Mammary epithelial cell (primary cell): ENCODE measurements at regions of chr15 and their contacts with region 1.

Region 1: DNA sequence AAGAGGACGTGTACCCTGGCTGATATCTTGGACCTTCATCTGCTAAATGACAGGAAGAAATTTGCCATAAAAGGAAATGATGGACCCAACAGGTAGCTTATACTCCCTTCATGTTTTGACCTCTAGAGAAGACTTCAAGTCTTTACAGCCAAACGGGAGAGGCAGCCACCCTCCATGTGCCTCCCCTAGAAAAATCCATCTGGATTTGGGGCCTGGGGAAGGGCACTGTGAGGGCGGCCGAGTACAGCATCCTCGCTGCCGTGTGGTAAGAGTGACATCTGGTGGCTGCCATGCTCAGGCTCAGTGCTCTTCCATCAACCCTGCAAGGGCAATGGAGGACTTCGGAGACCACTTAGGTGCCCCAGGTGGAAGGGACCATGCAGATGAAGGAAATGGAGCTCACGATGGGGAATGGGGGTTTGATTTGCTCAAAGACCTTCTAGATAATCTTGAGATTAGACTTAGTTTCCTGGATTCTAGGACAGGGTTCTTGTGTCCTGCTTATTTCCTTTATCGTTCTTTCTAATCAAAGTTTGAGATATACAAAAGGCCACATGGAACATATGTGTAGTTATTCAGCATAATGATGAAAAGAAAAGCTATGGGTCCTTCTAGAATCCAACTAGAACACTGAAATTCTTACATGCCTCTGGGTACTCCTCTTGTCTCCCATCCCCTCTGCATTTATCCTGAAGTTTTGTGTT is 44.4 kb downstream of the AQP9 start:
- DNase-seq: peak; percentile 45
- H3K4me3 ChIP-seq: no peak overlapping the region
- H3K27ac ChIP-seq: no peak overlapping the region
- H3K4me1 ChIP-seq: peaks cover 22% of the 10 kb centered on the region
- H3K27me3 ChIP-seq: no peaks in the 10 kb centered on the region
- CTCF ChIP-seq: peak; percentile 97 to 99

Region 2: GRCh38 chr15:57751177-57751800 is 431.3 kb before region 1 on chr15:
- CTCF ChIA-PET with region 1: interaction called, 7 read pairs
- dilution Hi-C with region 1: no loop called
- in situ Hi-C with region 1: loop called in 1 of 2 experiments (anchors 10 kb)
- intact Hi-C with region 1: loop called (anchors 5 kb)
- DNase-seq: peak; percentile 34
- H3K4me3 ChIP-seq: no peak overlapping the region
- H3K27ac ChIP-seq: no peak overlapping the region
- H3K4me1 ChIP-seq: no peaks in the 10 kb centered on the region
- H3K27me3 ChIP-seq: no peaks in the 10 kb centered on the region
- CTCF ChIP-seq: peak; percentile 67 to 86

Region 3: GRCh38 chr15:57969354-57969753 is 213.3 kb before region 1 on chr15:
- CTCF ChIA-PET with region 1: no interaction called
- dilution Hi-C with region 1: no loop called
- in situ Hi-C with region 1: no loop called
- intact Hi-C with region 1: loop called (anchors 5 kb)
- DNase-seq: peak; percentile 11
- H3K4me3 ChIP-seq: no peak overlapping the region
- H3K27ac ChIP-seq: no peak overlapping the region
- H3K4me1 ChIP-seq: no peaks in the 10 kb centered on the region
- H3K27me3 ChIP-seq: no peaks in the 10 kb centered on the region
- CTCF ChIP-seq: peak; percentile 43 to 56

Region 4: DNA sequence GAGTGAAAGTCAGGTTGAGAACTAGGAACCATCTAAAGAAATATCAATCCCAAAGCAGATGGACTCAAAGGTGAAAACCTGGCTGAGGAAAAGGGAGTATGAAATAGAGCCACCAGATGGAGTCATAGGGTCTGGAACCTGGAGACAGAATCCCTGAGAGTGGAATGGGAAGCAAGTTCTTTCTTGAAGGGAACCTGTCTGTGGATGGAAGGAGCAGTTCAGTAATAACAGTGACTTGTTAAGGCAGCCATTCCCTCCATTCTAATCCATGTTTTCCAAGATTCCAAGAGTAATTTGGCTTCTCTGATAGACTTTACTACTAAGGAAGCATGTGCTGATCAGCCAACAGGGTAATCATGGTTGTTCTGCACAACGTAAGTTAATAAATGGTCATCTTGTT is 66.9 kb before region 1 on chr15:
- CTCF ChIA-PET with region 1: no interaction called
- dilution Hi-C with region 1: no loop called
- in situ Hi-C with region 1: no loop called
- intact Hi-C with region 1: loop called (anchors 1 kb)
- DNase-seq: peak; percentile 56
- H3K4me3 ChIP-seq: no peak overlapping the region
- H3K27ac ChIP-seq: no peak overlapping the region
- H3K4me1 ChIP-seq: no peaks in the 10 kb centered on the region
- H3K27me3 ChIP-seq: no peaks in the 10 kb centered on the region
- CTCF ChIP-seq: peak; percentile 37 to 59